ENCODE measurements at regions of chr12 and their contacts with region 1.

Region 1: GRCh38 chr12:26028953-26029735 is 70.7 kb downstream of the RASSF8 start:
- DNase-seq: peak in 3 of 4 donors; percentile 29 to 36 (median 29)
- ATAC-seq: peak; percentile 63
- H3K4me3 ChIP-seq: no peak overlapping the region
- H3K27ac ChIP-seq: peak overlapping the region in 3 of 4 donors; percentile 18 to 47 (median 22)
- H3K4me1 ChIP-seq: peaks cover 33% of the 10 kb centered on the region
- H3K27me3 ChIP-seq: no peaks in the 10 kb centered on the region
- CTCF ChIP-seq: peak; percentile 53 to 84 (median 75)
- POLR2A ChIP-seq: no peak

Region 2: GRCh38 chr12:25436203-25437030 is 592.7 kb before region 1 on chr12:
- intact Hi-C with region 1: loop called (anchors 10 kb)
- DNase-seq: peak; percentile 23 to 54 (median 32)
- ATAC-seq: peak; percentile 74
- H3K4me3 ChIP-seq: no peak overlapping the region
- H3K27ac ChIP-seq: no peak overlapping the region
- H3K4me1 ChIP-seq: peaks cover 4% of the 10 kb centered on the region
- H3K27me3 ChIP-seq: no peaks in the 10 kb centered on the region
- CTCF ChIP-seq: peak; percentile 49 to 87 (median 83)
- POLR2A ChIP-seq: no peak

Region 3: GRCh38 chr12:26077915-26078702 is 49.0 kb after region 1 on chr12:
- intact Hi-C with region 1: no loop called
- DNase-seq: no peak
- ATAC-seq: no peak
- H3K4me3 ChIP-seq: no peak overlapping the region
- H3K27ac ChIP-seq: no peak overlapping the region
- H3K4me1 ChIP-seq: no peaks in the 10 kb centered on the region
- H3K27me3 ChIP-seq: no peaks in the 10 kb centered on the region
- CTCF ChIP-seq: no peak
- POLR2A ChIP-seq: no peak